Common myeloid progenitor, CD34-positive (primary cell): ENCODE measurements at regions of chr6 and their contacts with region 1.

Region 1: DNA sequence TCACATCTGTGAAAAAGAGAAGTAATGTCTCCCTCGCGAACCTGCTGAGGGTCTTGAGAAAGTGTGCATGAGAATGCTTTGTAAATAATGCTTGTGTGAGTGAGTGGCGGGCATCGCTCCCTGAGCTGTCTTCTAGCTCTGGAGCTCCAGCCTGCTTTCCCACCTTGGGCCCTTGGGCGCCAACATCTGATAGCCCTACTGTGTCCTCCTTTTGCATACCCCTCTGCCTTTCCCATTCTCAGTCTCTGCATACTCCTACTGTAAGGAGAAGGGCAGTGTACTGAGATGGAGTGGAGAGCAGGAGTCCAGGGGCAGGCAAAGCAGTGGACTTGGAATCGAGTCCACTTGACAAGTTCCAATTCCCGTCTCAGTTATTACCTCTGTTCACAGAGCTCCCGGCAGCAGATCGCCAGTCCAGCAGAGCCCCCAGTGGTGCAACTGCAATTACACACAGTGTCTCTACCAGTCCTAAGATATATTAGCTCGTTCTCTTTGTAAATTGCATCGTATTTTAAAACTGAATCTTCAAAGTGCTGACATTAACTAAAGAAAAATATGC is 847 bp upstream of the NCR2 start:
- DNase-seq: peak; percentile 8 to 30 (median 25)
- H3K4me3 ChIP-seq: no peak overlapping the region
- H3K27ac ChIP-seq: no peak overlapping the region
- H3K4me1 ChIP-seq: peaks cover 0 to 56% (median 22%) of the 10 kb centered on the region in 4 experiments
- H3K27me3 ChIP-seq: no peaks in the 10 kb centered on the region

Region 2: DNA sequence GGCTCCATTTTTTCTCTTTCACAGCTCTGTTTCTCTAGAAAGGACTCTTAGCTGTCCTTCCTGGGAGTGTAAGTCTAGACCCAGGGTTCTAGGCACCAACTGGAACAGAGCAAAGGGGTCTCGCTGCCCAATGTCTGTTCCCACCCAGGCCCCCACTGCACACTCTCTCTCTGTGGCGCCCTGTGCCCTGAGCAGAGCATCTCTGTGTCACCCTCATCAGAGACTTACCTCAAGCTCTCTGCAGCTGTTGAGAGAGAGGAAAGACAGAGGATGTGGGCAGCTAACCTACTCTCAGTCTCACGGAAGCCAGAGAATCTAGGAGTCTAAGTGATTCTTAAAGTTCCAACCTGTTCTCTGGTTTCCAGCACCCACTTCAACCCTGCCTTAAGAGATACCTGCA is 10.3 kb after region 1 on chr6:
- CTCF ChIA-PET with region 1: interaction called, 4 read pairs
- POLR2A ChIA-PET with region 1: interaction called, 11 read pairs
- DNase-seq: peak in 2 of 3 donors; percentile 61 to 73
- H3K4me3 ChIP-seq: no peak overlapping the region
- H3K27ac ChIP-seq: no peak overlapping the region
- H3K4me1 ChIP-seq: peaks cover 0 to 13% (median 5%) of the 10 kb centered on the region in 4 experiments
- H3K27me3 ChIP-seq: peaks cover 0 to 3% (median 0%) of the 10 kb centered on the region in 5 experiments